B cell (primary cell): ENCODE measurements at regions of chr6 and their contacts with region 1.

Region 1: DNA sequence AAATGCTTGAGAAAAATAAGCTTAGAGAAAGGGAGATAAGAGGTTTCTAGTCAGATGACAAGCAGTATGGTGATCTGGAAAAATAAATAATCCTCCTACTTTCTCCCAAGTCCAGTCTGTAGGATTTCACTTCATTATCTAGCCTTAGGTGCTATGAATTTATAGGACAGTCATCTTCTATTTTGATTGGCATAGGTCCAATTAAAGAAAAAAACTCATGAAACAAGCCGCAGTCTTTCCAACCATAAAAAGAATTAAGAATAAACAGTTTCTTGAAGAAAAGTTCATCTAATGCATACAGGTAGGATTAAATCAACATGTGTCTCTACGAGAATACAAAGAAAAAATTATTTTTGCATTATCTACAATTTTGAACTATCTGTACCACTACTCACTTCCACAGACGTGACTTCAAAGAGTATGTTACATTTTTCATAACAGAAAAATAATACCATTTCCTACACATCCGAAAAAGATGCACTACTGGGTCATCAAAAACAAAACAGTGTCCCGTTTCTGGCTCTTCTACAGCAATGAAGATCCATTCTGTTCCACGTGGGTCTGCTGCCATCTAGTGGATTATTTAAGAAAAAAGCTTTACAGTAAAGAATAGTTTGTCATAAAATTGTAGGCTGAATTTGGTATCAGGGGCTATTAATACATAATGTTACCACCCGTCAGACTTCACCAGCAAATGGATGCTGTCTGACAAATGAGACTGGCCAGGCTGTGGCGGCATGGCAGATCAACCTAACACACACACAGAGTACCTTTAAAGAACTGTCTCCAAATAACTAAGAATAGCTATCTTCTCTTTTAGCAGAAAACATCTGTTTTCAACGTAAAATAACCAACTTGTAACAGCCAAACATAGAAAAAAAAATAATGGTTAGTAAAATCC is 28.9 kb downstream of the STX7 start:
- DNase-seq: peak; percentile 83
- ATAC-seq: peak; percentile 78
- H3K4me3 ChIP-seq: peak overlapping the region in 1 of 5 experiments; percentile 5
- H3K4me3 Mint-ChIP-seq: peak overlapping the region; percentile 41
- H3K27ac ChIP-seq: peak overlapping the region; percentile 27 to 92
- H3K27ac Mint-ChIP-seq: peak overlapping the region; percentile 75
- H3K4me1 ChIP-seq: peaks cover 59 to 88% of the 10 kb centered on the region in 2 donors
- H3K4me1 Mint-ChIP-seq: peaks cover 85% of the 10 kb centered on the region
- H3K27me3 ChIP-seq: no peaks in the 10 kb centered on the region
- H3K27me3 Mint-ChIP-seq: no peaks in the 10 kb centered on the region
- CTCF ChIP-seq: peak; percentile 84

Region 2: DNA sequence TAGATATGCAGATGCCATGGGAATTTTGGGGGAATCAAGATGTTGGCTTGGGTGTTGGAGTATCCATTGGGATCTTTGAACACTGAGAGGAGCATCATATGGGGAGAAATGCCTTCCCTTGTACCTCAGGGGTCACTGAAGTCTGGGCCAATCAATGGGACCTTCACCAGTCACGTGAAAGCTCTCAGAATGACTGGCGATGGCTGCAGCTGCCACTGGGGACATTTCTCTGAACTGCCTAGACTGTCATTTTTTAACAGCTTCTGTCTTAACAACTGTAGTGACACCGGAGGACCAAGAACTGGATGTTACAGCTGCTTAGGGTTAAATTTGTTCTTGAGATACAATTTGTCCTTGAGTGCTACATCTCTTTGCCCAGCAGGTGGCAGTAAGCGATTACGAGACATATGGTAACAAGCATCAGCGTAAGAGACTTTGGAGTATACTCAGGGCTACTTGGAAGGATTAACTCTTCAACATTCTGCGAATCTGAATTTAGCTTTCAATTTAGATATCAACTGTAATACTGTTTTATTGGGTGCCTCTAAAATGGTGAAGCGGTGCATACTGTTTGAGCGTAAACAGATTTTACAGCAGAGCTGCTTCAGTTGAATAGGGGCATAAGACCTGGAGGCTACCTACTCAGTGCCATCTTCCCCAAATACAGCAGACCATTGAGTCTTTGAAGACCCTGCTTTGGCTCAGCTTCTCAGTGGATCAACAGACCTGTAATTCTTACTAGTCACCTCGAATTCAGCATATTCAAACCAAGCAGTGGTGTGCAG is 568.9 kb before region 1 on chr6:
- CTCF ChIA-PET with region 1: no interaction called
- POLR2A ChIA-PET with region 1: no interaction called
- intact Hi-C with region 1: loop called (anchors 5 kb)
- DNase-seq: peak; percentile 75
- ATAC-seq: peak; percentile 80
- H3K4me3 ChIP-seq: no peak overlapping the region
- H3K4me3 Mint-ChIP-seq: no peak overlapping the region
- H3K27ac ChIP-seq: no peak overlapping the region
- H3K27ac Mint-ChIP-seq: no peak overlapping the region
- H3K4me1 ChIP-seq: peaks cover 17 to 20% of the 10 kb centered on the region in 2 donors
- H3K4me1 Mint-ChIP-seq: peaks cover 21% of the 10 kb centered on the region
- H3K27me3 ChIP-seq: peaks cover 0 to 27% (median 12%) of the 10 kb centered on the region in 4 experiments
- H3K27me3 Mint-ChIP-seq: peaks cover 39% of the 10 kb centered on the region
- CTCF ChIP-seq: peak; percentile 88

Region 3: DNA sequence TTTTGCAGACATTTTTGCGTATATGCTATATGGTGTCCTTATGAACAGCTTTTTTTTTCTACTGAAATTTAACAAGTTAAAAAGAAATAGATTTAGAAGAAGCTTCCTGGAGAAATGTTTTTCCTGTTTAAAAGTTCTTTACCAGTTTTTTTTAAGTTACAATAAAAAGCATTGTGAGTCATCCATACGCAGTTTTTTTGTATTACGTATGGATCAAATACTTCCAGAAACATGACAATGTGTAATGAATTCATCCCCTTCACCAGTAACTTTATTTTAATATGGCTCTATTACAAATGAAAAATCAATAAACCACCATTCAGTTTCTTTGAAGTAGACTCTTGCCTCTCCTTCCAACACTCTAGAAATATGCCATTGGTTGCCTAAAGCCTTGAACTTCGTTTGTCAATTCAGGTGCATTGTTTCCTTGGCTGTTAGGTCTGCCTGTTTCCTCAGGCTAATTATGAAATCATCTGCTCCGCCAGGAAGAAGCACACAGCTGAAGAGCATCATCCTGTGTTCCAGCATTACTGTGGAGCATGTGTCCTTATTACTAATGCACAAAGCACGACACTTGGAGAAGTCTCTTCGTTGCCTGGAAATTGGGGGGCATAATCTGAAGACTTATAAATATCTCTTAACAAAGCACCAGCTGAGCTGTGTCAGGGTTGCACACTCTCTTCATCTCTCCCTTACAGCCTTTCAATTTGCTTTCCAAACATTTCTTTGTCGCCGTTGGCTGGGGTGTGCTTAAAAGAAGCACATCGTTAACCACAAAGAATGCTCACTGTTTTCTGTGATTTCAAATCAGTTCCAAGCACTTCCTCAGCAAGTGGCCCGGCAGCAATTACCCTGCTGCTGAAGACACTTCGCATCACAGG is 92.4 kb before region 1 on chr6:
- CTCF ChIA-PET with region 1: interaction called, 30 read pairs
- POLR2A ChIA-PET with region 1: interaction called, 4 read pairs
- intact Hi-C with region 1: loop called (anchors 2 kb)
- DNase-seq: no peak
- ATAC-seq: no peak
- H3K4me3 ChIP-seq: no peak overlapping the region
- H3K4me3 Mint-ChIP-seq: no peak overlapping the region
- H3K27ac ChIP-seq: no peak overlapping the region
- H3K27ac Mint-ChIP-seq: no peak overlapping the region
- H3K4me1 ChIP-seq: peaks cover 5 to 27% of the 10 kb centered on the region in 2 donors
- H3K4me1 Mint-ChIP-seq: peaks cover 27% of the 10 kb centered on the region
- H3K27me3 ChIP-seq: no peaks in the 10 kb centered on the region
- H3K27me3 Mint-ChIP-seq: no peaks in the 10 kb centered on the region
- CTCF ChIP-seq: no peak

Region 4: GRCh38 chr6:132471788-132472187 is 12.2 kb before region 1 on chr6:
- CTCF ChIA-PET with region 1: interaction called, 21 read pairs
- POLR2A ChIA-PET with region 1: interaction called, 7 read pairs
- intact Hi-C with region 1: loop called (anchors 2 kb)
- DNase-seq: no peak
- ATAC-seq: no peak
- H3K4me3 ChIP-seq: no peak overlapping the region
- H3K4me3 Mint-ChIP-seq: no peak overlapping the region
- H3K27ac ChIP-seq: peak overlapping the region in 1 of 2 donors; percentile 0
- H3K27ac Mint-ChIP-seq: no peak overlapping the region
- H3K4me1 ChIP-seq: peaks cover 5 to 15% of the 10 kb centered on the region in 2 donors
- H3K4me1 Mint-ChIP-seq: peaks cover 12% of the 10 kb centered on the region
- H3K27me3 ChIP-seq: no peaks in the 10 kb centered on the region
- H3K27me3 Mint-ChIP-seq: no peaks in the 10 kb centered on the region
- CTCF ChIP-seq: no peak

Region 5: GRCh38 chr6:132506869-132507808 is 23.1 kb after region 1 on chr6:
- CTCF ChIA-PET with region 1: interaction called, 81 read pairs
- POLR2A ChIA-PET with region 1: interaction called, 7 read pairs
- intact Hi-C with region 1: no loop called
- DNase-seq: no peak
- ATAC-seq: no peak
- H3K4me3 ChIP-seq: peak overlapping the region in 2 of 5 experiments; percentile 16 to 27
- H3K4me3 Mint-ChIP-seq: peak overlapping the region; percentile 80
- H3K27ac ChIP-seq: peak overlapping the region in 1 of 2 donors; percentile 88
- H3K27ac Mint-ChIP-seq: peak overlapping the region; percentile 81
- H3K4me1 ChIP-seq: peaks cover 63 to 69% of the 10 kb centered on the region in 2 donors
- H3K4me1 Mint-ChIP-seq: peaks cover 84% of the 10 kb centered on the region
- H3K27me3 ChIP-seq: no peaks in the 10 kb centered on the region
- H3K27me3 Mint-ChIP-seq: no peaks in the 10 kb centered on the region
- CTCF ChIP-seq: no peak

Region 6: DNA sequence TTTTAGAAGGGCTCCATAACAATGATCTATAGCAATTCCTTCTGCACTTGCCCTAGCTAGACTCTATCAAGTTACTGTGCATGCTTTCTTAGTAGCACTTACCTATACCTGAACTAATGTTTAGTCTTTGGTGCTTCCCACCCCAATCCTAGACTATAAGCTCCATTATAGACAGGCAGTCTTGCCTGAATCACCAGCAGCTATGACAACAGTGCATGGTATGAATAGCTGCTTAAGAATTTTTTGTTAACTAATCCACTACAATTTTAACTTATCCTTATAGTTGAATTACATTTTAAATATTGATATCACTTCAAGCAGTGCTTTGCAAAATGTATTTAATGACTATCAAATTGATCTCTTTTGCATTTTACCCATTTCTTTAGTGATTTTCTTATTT is 494.7 kb after region 1 on chr6:
- CTCF ChIA-PET with region 1: no interaction called
- POLR2A ChIA-PET with region 1: no interaction called
- intact Hi-C with region 1: no loop called
- DNase-seq: no peak
- ATAC-seq: no peak
- H3K4me3 ChIP-seq: no peak overlapping the region
- H3K4me3 Mint-ChIP-seq: no peak overlapping the region
- H3K27ac ChIP-seq: no peak overlapping the region
- H3K27ac Mint-ChIP-seq: no peak overlapping the region
- H3K4me1 ChIP-seq: no peaks in the 10 kb centered on the region
- H3K4me1 Mint-ChIP-seq: no peaks in the 10 kb centered on the region
- H3K27me3 ChIP-seq: peaks cover 0 to 4% (median 0%) of the 10 kb centered on the region in 4 experiments
- H3K27me3 Mint-ChIP-seq: peaks cover 26% of the 10 kb centered on the region
- CTCF ChIP-seq: no peak